ENCODE measurements at regions of chr3 and their contacts with region 1.

Region 1: GRCh38 chr3:160399125-160400029 is at the starts of genes IFT80 and SMC4:
- DNase-seq: peak; percentile 96
- H3K4me3 ChIP-seq: peak within 1 kb of the TSS; percentile 100
- H3K27ac ChIP-seq: peak within 1 kb of the TSS; percentile 92
- H3K4me1 ChIP-seq: peaks cover 43% of the 10 kb centered on the region
- CTCF ChIP-seq: no peak
- total RNA-seq, gene IFT80: 33.5 and 37.3 TPM in 2 replicates
- total RNA-seq, gene SMC4: 316 and 348 TPM in 2 replicates

Region 2: DNA sequence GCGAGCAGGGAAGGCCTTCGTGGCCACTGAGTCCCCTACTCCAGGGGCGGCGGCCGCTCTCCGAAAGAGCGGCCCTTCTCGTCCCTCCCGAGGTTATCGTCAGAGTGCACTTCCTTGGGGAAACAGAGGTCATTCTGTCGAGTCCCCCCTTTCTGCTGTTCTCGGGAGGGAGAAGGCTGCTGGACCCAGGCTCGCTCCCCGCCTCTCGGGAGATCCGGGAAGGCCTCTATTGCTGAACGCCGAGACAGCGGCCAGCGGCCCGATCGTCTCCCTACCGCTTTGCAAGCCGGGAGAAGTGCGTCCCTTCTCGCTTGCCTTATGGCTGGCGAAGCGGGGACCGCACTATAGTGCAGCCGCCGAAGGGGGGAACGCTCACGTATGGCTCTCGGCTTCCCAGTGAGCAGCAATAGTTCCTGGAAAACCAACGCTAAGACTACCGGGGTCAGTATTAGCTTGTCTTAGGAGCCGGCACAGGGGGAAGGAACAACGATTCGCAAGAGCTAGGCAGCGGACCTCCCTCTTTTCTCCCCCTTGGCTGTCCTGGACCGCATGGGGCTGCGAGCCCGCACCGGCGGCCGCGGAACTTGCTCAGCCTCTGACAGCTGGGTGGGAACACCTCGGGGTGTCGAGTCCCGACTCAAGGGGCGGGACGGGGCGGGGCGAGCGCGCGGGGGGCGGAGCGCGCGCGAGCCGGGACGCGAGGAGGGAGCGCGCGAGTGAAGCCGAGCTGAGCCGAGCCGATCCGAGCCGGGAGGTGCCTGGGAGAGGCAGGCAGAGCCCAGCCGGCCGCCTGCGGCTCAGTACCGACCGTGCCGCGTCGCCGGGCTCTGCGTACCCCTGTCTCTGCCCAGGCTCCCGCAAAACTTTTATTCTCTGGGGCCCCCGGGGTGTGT is 355.7 kb after region 1 on chr3:
- CTCF ChIA-PET with region 1: no interaction called
- POLR2A ChIA-PET with region 1: no interaction called
- intact Hi-C with region 1: loop called (anchors 2 kb)
- DNase-seq: peak; percentile 95
- H3K4me3 ChIP-seq: peak overlapping the region; percentile 84
- H3K27ac ChIP-seq: peak overlapping the region; percentile 69
- H3K4me1 ChIP-seq: peaks cover 26% of the 10 kb centered on the region
- CTCF ChIP-seq: no peak